Activated CD4-positive, alpha-beta T cell treated with anti-CD3 and anti-CD28 coated beads for 36 hours (primary cell): ENCODE measurements at regions of chr6 and their contacts with region 1.

Region 1: DNA sequence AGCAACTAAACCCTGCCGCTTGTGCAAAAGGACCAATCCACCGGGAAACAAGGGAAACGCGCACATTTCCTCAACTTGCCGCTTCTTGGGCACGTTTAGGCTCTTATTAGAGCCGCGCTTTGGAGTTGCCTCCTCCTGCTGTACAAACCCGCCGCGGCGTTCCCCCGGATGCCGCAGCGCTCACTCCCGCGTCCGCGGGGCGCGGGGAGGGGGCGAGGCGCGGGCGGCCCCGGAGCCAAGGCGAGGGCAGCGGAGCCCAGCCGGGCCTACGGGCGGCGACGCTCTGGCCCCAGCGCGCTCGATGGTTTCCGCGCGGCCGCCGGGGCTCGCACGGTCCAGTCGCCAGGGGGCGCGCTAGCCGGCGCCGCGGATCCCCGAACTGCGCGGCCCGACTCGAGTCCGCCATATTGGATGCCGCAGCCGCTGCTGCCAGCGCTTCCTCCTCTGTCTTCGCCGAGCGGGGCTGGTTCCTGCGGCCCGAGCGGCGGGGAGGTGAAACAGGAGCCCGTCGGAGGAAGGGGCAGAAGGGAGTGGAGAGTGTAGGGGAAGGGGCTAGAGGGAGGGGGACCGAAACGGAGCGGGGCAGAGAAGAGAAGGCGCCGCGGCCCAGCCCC is at the start of gene SCAF8:
- DNase-seq: peak; percentile 90
- ATAC-seq: peak; percentile 78
- H3K4me3 Mint-ChIP-seq: peak within 1 kb of the TSS; percentile 86
- H3K27ac Mint-ChIP-seq: peak within 1 kb of the TSS; percentile 94
- H3K4me1 Mint-ChIP-seq: peaks cover 42% of the 10 kb centered on the region
- H3K27me3 Mint-ChIP-seq: no peaks in the 10 kb centered on the region
- total RNA-seq, gene SCAF8: 33.9 to 44.5 TPM

Region 2: DNA sequence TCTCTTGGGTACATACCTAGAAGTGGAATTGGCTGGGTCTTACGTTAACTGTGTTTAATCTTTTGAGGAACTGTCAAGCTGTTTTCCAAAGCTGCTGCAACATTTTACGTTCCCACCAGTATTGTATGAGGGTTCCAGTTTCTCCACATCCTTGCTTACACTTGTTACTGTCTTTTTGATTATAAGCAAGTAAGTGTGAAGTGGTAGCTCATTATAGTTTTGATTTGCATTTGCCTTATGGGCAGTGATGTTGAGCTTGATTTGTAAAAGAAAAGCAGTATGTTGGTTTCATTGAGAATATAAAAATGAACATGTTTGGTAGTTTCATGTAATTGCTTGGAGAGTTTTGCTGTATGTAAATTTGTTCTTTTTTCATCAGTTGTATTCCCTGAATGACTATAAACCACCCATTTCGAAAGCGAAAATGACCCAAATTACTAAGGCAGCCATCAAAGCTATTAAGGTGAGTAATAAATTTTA is 40.5 kb after region 1 on chr6:
- CTCF ChIA-PET with region 1: interaction called, 4 read pairs
- POLR2A ChIA-PET with region 1: interaction called, 12 read pairs
- intact Hi-C with region 1: loop called (anchors 1 to 5 kb)
- DNase-seq: no peak
- ATAC-seq: peak; percentile 83
- H3K4me3 Mint-ChIP-seq: no peak overlapping the region
- H3K27ac Mint-ChIP-seq: peak overlapping the region; percentile 34
- H3K4me1 Mint-ChIP-seq: peaks cover 48% of the 10 kb centered on the region
- H3K27me3 Mint-ChIP-seq: no peaks in the 10 kb centered on the region

Region 3: DNA sequence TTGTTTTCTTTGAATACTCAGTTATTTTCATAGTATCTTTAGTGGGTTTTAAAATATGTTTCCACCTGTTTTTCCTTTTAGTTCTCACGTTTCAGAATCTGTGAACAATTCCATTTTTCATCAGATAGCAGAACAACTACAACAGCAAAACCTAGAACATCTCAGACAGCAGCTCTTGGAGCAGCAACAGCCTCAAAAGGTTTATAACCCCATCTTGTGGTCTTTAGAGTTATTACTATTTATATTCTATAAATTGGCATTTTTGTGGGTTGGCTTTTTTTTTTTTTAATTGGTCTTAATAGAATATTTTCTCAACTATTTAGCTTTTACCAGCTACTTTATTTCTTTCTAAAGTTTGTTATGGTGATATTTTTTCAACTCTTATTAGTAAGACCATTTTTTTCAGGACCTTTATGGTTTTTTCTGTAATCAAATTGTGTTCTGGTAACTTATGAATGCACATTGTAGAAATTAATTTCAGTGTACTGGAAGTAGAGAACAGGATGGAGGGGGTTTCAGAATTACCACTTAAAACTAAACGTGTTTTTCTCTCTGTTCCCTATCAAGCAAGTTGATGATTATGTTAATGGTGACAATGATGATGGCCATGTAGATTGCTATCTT is 72.3 kb after region 1 on chr6:
- CTCF ChIA-PET with region 1: no interaction called
- POLR2A ChIA-PET with region 1: interaction called, 4 read pairs
- intact Hi-C with region 1: loop called (anchors 1 kb)
- DNase-seq: no peak
- ATAC-seq: no peak
- H3K4me3 Mint-ChIP-seq: no peak overlapping the region
- H3K27ac Mint-ChIP-seq: no peak overlapping the region
- H3K4me1 Mint-ChIP-seq: peaks cover 3% of the 10 kb centered on the region
- H3K27me3 Mint-ChIP-seq: no peaks in the 10 kb centered on the region

Region 4: DNA sequence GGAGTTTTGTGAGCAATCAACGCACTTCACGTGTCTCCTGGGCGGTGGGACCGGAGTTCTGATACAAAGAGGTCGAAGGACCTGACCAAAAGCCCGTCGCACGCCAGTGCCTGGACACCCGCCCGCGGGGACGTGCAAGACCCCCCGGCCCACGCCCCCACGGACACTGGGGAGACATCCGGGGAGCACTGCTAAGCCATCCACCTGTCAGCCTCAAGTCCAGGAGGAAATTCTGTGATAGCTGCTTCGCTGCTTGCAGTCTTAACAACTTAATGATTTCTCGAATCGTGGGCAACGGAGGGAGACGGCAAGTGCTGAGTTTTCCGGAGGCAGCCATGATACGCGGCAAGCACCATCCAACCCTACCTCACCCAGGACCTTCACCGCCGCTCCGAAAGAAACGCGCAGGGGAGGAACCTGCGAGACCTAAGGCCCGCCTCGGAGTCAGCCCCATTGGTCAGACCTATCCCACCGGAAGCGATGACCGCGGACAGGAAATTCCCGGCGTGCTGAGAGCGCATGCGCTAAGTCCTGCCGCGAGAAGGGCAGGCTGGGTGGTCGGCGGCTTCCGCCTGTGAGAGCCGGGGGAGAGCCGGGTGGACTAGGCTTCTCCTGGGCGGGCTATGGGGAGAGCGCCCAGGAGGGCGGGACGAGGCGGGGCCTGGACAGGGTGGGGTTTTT is 581.1 kb after region 1 on chr6 and contains the start of gene TFB1M:
- CTCF ChIA-PET with region 1: interaction called, 3 read pairs
- POLR2A ChIA-PET with region 1: no interaction called
- intact Hi-C with region 1: loop called (anchors 1 kb)
- DNase-seq: peak; percentile 99
- ATAC-seq: peak; percentile 95
- H3K4me3 Mint-ChIP-seq: peak within 1 kb of the TSS; percentile 90
- H3K27ac Mint-ChIP-seq: peak within 1 kb of the TSS; percentile 98
- H3K4me1 Mint-ChIP-seq: peaks cover 39% of the 10 kb centered on the region
- H3K27me3 Mint-ChIP-seq: no peaks in the 10 kb centered on the region
- total RNA-seq, gene TFB1M: 45.5 to 56.4 TPM